CD4-positive, alpha-beta memory T cell (primary cell): ENCODE measurements at regions of chr22 and their contacts with region 1.

Region 1: GRCh38 chr22:42444077-42444904 is 12.1 kb upstream of the NFAM1 start:
- DNase-seq: peak; percentile 83 to 90 (median 85)
- H3K4me3 ChIP-seq: peak overlapping the region; percentile 33 to 71
- H3K4me3 Mint-ChIP-seq: peak overlapping the region; percentile 76 to 87 (median 84)
- H3K27ac ChIP-seq: peak overlapping the region; percentile 69
- H3K27ac Mint-ChIP-seq: peak overlapping the region; percentile 93 to 96 (median 94)
- H3K4me1 ChIP-seq: peaks cover 20% of the 10 kb centered on the region
- H3K4me1 Mint-ChIP-seq: peaks cover 14 to 34% (median 21%) of the 10 kb centered on the region in 4 donors
- H3K27me3 ChIP-seq: no peaks in the 10 kb centered on the region
- H3K27me3 Mint-ChIP-seq: no peaks in the 10 kb centered on the region

Region 2: DNA sequence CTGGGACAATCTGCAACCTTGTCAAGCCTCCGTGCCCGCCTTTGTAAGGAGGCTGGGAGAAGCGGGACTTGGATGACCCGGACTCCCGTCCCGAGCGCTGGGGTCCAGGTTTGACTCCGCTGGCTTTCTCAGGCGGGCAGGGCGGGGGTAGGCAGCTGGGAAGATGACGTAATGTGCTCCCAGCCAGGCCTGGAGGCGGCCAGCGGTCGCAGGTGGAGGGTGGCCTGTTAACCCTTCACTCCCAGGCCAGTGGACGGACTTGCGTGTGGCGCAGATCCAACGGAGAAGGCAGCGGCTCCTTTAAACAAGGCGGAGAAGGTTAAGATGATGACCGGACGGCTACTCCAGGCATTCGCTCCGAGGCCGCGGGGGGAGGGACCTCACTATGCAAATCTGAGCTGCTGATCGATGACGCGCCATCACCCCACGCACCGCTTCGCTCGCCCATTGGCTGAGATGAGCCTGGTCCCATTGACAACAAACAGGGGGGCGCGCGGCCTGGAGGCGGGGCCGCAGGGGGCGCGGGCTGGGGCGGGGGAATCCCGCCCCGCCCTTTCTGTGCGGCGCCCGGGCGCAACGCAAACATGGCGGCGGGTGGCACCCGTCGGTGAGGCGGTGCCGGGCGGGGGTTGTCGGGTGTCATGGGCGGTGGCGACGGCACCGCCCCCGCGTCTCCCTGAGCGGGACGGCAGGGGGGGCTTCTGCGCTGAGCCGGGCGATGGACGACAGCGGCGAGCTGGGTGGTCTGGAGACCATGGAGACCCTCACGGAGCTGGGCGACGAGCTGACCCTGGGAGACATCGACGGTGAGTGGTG is 611.5 kb before region 1 on chr22 and contains the start of gene SREBF2:
- CTCF ChIA-PET with region 1: no interaction called
- POLR2A ChIA-PET with region 1: interaction called, 12 read pairs
- intact Hi-C with region 1: no loop called
- DNase-seq: peak; percentile 97 to 99 (median 98)
- H3K4me3 ChIP-seq: peak within 1 kb of the TSS; percentile 36 to 93
- H3K4me3 Mint-ChIP-seq: peak within 1 kb of the TSS; percentile 92 to 97 (median 95)
- H3K27ac ChIP-seq: peak within 1 kb of the TSS; percentile 84
- H3K27ac Mint-ChIP-seq: peak within 1 kb of the TSS; percentile 98 to 100 (median 99)
- H3K4me1 ChIP-seq: peaks cover 26% of the 10 kb centered on the region
- H3K4me1 Mint-ChIP-seq: peaks cover 21 to 46% (median 31%) of the 10 kb centered on the region in 4 donors
- H3K27me3 ChIP-seq: no peaks in the 10 kb centered on the region
- H3K27me3 Mint-ChIP-seq: no peaks in the 10 kb centered on the region
- total RNA-seq, gene SREBF2: 109 to 112 TPM

Region 3: GRCh38 chr22:41966607-41967240 is 477.6 kb before region 1 on chr22:
- CTCF ChIA-PET with region 1: interaction called, 29 read pairs
- POLR2A ChIA-PET with region 1: interaction called, 12 read pairs
- intact Hi-C with region 1: no loop called
- DNase-seq: peak in 4 of 5 donors; percentile 39 to 58 (median 48)
- H3K4me3 ChIP-seq: no peak overlapping the region
- H3K4me3 Mint-ChIP-seq: no peak overlapping the region
- H3K27ac ChIP-seq: no peak overlapping the region
- H3K27ac Mint-ChIP-seq: peak overlapping the region in 1 of 7 donors; percentile 0
- H3K4me1 ChIP-seq: no peaks in the 10 kb centered on the region
- H3K4me1 Mint-ChIP-seq: peaks cover 0 to 4% (median 1%) of the 10 kb centered on the region in 4 donors
- H3K27me3 ChIP-seq: no peaks in the 10 kb centered on the region
- H3K27me3 Mint-ChIP-seq: peaks cover 3 to 8% of the 10 kb centered on the region in 2 donors

Region 4: DNA sequence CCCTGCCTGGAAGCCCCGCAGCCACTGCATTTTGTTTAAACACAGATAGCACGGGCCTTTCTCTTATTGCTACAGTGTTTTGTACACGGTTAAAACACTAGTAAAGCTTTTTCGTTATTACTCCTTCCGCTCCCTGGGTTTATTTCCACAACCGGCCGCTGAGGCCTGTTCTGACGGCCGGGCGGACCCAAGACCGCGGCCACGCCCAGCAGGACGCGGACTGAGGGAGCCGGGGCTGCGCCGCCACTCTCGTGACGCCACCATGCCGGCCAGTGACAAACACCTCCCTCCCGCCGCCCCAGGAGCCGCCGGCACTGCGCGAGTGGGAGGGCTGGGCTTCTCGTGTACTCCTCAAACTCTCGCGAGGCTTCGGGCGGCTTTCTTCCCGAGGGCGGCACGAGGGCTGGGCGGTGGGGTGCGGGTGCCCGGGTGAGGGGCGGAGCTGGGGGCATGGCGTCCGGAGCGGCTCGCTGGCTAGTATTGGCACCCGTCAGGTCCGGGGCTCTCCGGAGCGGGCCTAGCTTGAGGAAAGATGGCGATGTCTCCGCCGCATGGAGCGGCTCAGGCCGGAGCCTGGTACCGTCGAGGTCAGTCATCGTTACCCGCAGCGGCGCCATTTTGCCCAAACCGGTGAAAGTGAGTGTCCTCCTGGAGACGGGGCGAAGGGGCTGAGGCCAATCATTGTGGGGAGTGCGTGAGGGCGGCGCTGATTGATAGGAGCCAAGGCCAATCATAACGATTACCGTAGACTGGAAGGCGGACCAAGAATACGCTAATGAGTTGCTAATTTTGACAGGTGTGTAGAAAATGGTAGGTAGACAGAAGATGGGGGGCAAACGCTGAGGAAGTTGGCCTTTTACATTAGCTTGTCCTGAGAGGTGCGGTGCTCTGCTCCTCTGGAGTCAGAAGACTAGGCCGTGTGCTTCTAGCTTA is 364.7 kb before region 1 on chr22 and contains the start of gene SMDT1:
- CTCF ChIA-PET with region 1: interaction called, 3 read pairs
- POLR2A ChIA-PET with region 1: interaction called, 33 read pairs
- intact Hi-C with region 1: no loop called
- DNase-seq: peak; percentile 98 to 99 (median 99)
- H3K4me3 ChIP-seq: peak within 1 kb of the TSS; percentile 70 to 78
- H3K4me3 Mint-ChIP-seq: peak within 1 kb of the TSS; percentile 88 to 98 (median 96)
- H3K27ac ChIP-seq: peak within 1 kb of the TSS; percentile 97
- H3K27ac Mint-ChIP-seq: peak within 1 kb of the TSS; percentile 93 to 100 (median 99)
- H3K4me1 ChIP-seq: peaks cover 38% of the 10 kb centered on the region
- H3K4me1 Mint-ChIP-seq: peaks cover 19 to 58% (median 38%) of the 10 kb centered on the region in 4 donors
- H3K27me3 ChIP-seq: no peaks in the 10 kb centered on the region
- H3K27me3 Mint-ChIP-seq: no peaks in the 10 kb centered on the region
- total RNA-seq, gene SMDT1: 101 to 105 TPM

Region 5: DNA sequence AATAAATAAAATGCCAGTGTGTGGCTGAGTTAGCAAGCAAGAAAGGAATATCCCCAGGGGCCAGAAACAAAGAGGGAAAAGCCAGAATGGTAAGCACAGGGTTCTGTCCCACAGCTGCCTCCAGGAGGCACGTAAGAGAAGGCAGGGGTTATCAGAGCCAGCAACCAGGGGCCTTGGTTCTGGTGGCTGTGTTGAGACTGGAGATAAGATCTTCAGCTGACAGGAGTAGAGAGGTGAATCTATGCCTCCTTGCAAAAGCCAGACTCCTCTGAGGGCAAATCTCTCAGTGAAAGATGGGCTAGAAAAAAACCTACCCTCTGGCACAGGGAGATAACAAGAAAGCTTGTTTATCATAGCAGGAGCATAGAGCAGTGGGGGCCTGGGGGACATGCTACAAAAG is 17.7 kb after region 1 on chr22:
- CTCF ChIA-PET with region 1: interaction called, 10 read pairs
- POLR2A ChIA-PET with region 1: interaction called, 4 read pairs
- intact Hi-C with region 1: no loop called
- DNase-seq: no peak
- H3K4me3 ChIP-seq: no peak overlapping the region
- H3K4me3 Mint-ChIP-seq: no peak overlapping the region
- H3K27ac ChIP-seq: no peak overlapping the region
- H3K27ac Mint-ChIP-seq: no peak overlapping the region
- H3K4me1 ChIP-seq: no peaks in the 10 kb centered on the region
- H3K4me1 Mint-ChIP-seq: peaks cover 0 to 2% (median 0%) of the 10 kb centered on the region in 4 donors
- H3K27me3 ChIP-seq: peaks cover 4% of the 10 kb centered on the region
- H3K27me3 Mint-ChIP-seq: peaks cover 19 to 26% of the 10 kb centered on the region in 2 donors